ENCODE measurements at regions of chr4 and their contacts with region 1.

Region 1: DNA sequence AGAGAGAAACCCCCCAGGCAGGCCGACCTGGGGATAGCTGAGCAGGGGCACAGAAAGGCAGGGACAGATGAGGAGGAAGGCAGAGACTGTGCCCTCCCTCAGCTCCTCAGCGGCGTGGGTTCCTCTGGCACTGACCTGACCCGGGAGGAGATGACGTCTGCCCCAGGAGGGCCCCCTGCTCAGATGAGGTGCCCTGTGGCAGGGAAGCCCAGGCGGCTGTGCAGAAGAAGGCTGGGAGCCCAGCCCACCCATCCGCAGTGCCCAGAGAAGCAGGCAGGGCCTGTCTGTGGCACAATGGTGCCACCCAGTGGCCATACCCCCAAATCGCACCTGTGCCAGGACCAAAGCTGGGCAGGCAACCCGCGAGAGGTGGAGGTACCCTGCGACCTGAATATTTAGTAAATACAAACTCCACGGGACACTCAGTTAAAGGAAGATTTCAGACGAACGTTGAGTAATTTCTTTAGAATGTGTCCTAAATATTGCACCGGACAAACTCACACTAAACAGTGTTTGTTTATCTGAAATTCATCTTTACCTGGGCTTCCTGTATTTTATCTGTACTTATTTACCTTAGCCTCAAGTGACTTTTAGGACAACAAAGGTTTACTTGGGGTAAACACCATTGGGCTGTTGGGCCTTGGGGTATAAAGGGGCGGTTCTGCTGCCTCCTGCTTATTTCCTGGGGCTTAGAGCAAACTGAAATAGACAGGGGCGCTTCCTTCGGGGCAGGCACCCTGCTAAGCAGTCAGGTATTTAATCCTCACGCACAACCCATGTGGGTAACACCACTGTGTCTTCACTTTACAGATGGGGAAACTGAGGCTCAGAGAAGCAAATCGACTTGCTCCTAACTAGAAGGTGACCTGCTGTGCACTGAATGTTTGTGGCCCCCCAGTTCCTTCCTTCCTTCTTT is 46.5 kb upstream of the HMX1 start:
- DNase-seq: peak; percentile 64 to 86
- ATAC-seq: peak; percentile 47
- H3K4me3 ChIP-seq: no peak overlapping the region
- H3K27ac ChIP-seq: no peak overlapping the region
- H3K4me1 ChIP-seq: no peaks in the 10 kb centered on the region
- H3K27me3 ChIP-seq: no peaks in the 10 kb centered on the region

Region 2: DNA sequence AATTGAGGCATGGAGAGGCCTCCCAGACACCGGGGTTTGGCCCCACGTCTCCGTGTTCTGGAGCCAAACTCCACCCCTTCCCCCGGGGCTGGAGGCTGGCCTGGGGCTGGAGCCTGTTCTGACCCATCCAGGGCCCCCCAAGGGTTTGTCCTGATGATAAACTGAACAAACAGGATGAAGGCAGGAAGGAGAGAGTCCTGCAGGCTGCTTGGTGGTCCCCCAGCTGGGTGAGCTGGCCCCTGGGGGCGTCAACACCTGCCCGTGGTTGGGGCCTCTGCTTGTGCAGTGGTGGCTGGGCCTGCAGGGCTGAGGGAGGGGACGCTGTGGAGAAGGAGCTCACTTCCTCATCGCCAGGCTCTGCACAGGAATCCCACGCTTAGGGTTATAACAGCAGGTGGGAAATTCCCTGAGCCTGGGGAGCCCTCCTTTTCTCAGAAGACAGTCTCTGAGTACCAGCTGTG is 716.8 kb before region 1 on chr4:
- intact Hi-C with region 1: loop called in 1 of 2 experiments (anchors 10 kb)
- DNase-seq: no peak
- ATAC-seq: no peak
- H3K4me3 ChIP-seq: no peak overlapping the region
- H3K27ac ChIP-seq: no peak overlapping the region
- H3K4me1 ChIP-seq: no peaks in the 10 kb centered on the region
- H3K27me3 ChIP-seq: no peaks in the 10 kb centered on the region

Region 3: GRCh38 chr4:8607603-8608481 is 310.3 kb before region 1 on chr4:
- intact Hi-C with region 1: loop called in 1 of 2 experiments (anchors 10 kb)
- DNase-seq: no peak
- ATAC-seq: no peak
- H3K4me3 ChIP-seq: no peak overlapping the region
- H3K27ac ChIP-seq: no peak overlapping the region
- H3K4me1 ChIP-seq: no peaks in the 10 kb centered on the region
- H3K27me3 ChIP-seq: no peaks in the 10 kb centered on the region

Region 4: GRCh38 chr4:8688041-8688937 is 229.8 kb before region 1 on chr4:
- intact Hi-C with region 1: loop called in 1 of 2 experiments (anchors 10 kb)
- DNase-seq: peak in 1 of 2 donors; percentile 67
- ATAC-seq: no peak
- H3K4me3 ChIP-seq: no peak overlapping the region
- H3K27ac ChIP-seq: no peak overlapping the region
- H3K4me1 ChIP-seq: no peaks in the 10 kb centered on the region
- H3K27me3 ChIP-seq: no peaks in the 10 kb centered on the region

Region 5: GRCh38 chr4:8705161-8706145 is 212.7 kb before region 1 on chr4:
- intact Hi-C with region 1: no loop called
- DNase-seq: peak in 1 of 2 donors; percentile 67
- ATAC-seq: no peak
- H3K4me3 ChIP-seq: no peak overlapping the region
- H3K27ac ChIP-seq: no peak overlapping the region
- H3K4me1 ChIP-seq: no peaks in the 10 kb centered on the region
- H3K27me3 ChIP-seq: no peaks in the 10 kb centered on the region

Measured in aorta (tissue), 5 donors.